Colonic mucosa (tissue), 4 donors: ENCODE measurements at regions of chr9 and their contacts with region 1.

Region 1: GRCh38 chr9:90102292-90102901 is 497.6 kb downstream of the GADD45G start:
- DNase-seq: peak; percentile 90
- H3K4me3 ChIP-seq: no peak overlapping the region
- H3K27ac ChIP-seq: no peak overlapping the region
- H3K4me1 ChIP-seq: no peaks in the 10 kb centered on the region
- H3K27me3 ChIP-seq: no peaks in the 10 kb centered on the region
- CTCF ChIP-seq: peak; percentile 83

Region 2: GRCh38 chr9:89597711-89598625 is 504.4 kb before region 1 on chr9:
- intact Hi-C with region 1: loop called (anchors 2 kb)
- DNase-seq: peak; percentile 75
- H3K4me3 ChIP-seq: no peak overlapping the region
- H3K27ac ChIP-seq: no peak overlapping the region
- H3K4me1 ChIP-seq: no peaks in the 10 kb centered on the region
- H3K27me3 ChIP-seq: no peaks in the 10 kb centered on the region
- CTCF ChIP-seq: peak; percentile 71

Region 3: DNA sequence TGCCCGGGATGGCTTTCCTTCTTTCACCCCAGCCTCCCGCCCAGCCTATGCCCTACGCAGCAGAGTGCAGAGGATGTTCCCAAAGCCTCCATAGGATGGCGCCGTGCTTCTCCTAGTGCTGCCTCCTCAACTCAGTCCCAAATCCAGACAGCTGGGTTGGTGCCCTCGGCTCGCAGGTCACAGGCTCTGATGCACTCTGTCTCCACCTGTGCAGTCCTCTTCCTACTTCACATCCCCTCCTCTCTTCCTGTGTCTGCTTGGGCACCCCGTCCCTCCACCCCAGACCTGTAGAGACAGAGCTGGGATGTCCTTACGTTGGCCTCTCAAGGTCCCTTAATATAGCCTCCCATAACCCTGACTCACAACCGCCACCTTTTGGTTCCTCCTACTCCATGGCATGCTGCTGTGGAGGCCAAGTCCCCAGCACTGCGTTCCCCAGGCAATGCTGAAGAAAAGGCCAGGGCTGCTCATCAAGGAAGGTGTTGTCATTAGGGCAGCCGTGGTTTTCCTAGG is 183.2 kb before region 1 on chr9:
- intact Hi-C with region 1: loop called (anchors 5 kb)
- DNase-seq: peak; percentile 67
- H3K4me3 ChIP-seq: no peak overlapping the region
- H3K27ac ChIP-seq: no peak overlapping the region
- H3K4me1 ChIP-seq: no peaks in the 10 kb centered on the region
- H3K27me3 ChIP-seq: no peaks in the 10 kb centered on the region
- CTCF ChIP-seq: no peak

Region 4: DNA sequence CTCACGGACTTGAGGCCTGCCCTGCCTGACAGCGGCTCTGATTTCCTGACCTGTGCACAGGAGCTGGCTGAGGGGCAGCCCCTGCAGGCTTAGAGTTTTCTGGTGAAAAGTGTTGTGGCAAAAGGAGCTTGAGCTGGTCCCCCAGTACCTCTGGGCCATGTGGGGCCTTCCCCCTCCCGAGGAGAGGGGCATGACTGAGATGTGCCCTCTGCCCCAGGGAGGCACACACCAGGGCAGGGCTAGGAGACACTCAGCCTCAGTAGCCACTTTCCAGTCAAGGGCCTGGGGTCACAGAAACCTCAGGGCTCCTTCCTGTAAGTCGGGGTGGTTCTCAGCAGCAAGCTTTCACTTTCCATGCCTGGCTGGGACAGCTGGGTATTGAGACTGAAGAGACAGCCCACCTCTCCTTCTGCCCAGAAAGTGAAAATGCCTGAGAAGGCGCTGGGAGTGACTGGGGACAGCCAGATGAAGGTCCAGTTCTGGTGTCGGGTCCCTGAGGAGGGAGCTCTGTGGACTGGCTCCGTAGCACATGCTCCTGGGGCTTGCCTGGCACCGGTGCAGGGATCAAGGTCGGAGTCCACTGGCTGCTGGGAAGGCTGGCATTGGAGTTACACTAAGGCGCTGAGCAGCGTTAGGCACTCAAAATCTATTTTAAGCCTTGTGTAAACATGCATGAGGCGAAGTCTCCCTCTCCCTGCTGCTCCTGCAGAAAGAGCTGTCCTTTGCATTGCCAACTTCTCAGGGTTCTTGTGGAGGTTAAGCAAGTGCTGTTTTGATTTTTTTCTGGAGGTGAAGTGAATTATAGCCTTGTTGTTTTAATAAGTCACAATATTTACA is 102.6 kb before region 1 on chr9:
- intact Hi-C with region 1: loop called (anchors 10 kb)
- DNase-seq: peak; percentile 90
- H3K4me3 ChIP-seq: peak overlapping the region; percentile 4
- H3K27ac ChIP-seq: peak overlapping the region; percentile 92
- H3K4me1 ChIP-seq: peaks cover 9% of the 10 kb centered on the region
- H3K27me3 ChIP-seq: no peaks in the 10 kb centered on the region
- CTCF ChIP-seq: no peak